ENCODE measurements at regions of chr17 and their contacts with region 1.

Region 1: GRCh38 chr17:43940630-43941029 is 1.6 kb downstream of the PPY start:
- DNase-seq: peak; percentile 38 to 48 (median 47)
- H3K4me3 ChIP-seq: no peak overlapping the region
- H3K27ac ChIP-seq: no peak overlapping the region
- H3K4me1 ChIP-seq: peaks cover 0 to 12% (median 10%) of the 10 kb centered on the region in 4 experiments
- H3K27me3 ChIP-seq: peaks cover 0 to 20% (median 3%) of the 10 kb centered on the region in 5 experiments

Region 2: DNA sequence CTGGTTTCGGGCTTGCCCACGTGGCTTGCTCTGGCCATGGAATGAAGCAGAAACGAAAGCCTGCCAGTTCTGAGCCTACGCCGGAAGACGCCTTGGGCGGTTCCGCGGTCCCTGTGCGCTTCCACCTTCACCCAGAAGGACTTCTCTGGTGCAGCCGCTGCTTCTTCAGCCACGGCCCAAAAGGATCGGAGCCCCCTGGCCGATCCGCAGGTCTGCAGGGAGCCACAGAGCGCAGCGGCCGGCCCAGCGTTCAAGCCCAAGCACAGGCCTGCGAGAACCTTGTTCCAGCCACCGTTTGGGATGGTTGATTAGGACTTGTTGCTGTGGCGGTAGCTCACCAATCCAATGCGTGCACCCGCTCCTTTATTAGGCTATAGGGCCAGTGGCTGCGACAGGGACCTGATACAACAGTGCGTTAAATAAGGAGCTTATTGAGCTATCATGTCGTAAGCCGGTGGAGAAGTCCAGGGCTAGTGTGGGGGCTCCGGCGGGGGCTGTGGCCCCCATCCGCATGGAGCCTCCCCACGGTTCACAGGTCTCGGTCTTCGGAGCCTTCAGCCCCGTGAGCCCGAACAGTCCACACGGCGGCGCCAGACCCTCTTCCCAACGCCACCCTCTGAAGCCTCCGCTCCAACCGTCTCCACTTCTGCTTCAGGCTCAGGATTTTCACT is 23.1 kb before region 1 on chr17:
- CTCF ChIA-PET with region 1: interaction called, 11 read pairs
- POLR2A ChIA-PET with region 1: no interaction called
- DNase-seq: peak; percentile 60 to 78 (median 71)
- H3K4me3 ChIP-seq: peak overlapping the region in 6 of 7 experiments; percentile 39 to 83 (median 66)
- H3K27ac ChIP-seq: no peak overlapping the region
- H3K4me1 ChIP-seq: peaks cover 0 to 13% (median 6%) of the 10 kb centered on the region in 4 experiments
- H3K27me3 ChIP-seq: peaks cover 0 to 6% (median 0%) of the 10 kb centered on the region in 5 experiments

Region 3: GRCh38 chr17:43924558-43924957 is 16.1 kb before region 1 on chr17:
- CTCF ChIA-PET with region 1: interaction called, 17 read pairs
- POLR2A ChIA-PET with region 1: interaction called, 4 read pairs
- DNase-seq: no peak
- H3K4me3 ChIP-seq: no peak overlapping the region
- H3K27ac ChIP-seq: no peak overlapping the region
- H3K4me1 ChIP-seq: peaks cover 0 to 18% (median 15%) of the 10 kb centered on the region in 4 experiments
- H3K27me3 ChIP-seq: peaks cover 0 to 17% (median 15%) of the 10 kb centered on the region in 5 experiments

Region 4: DNA sequence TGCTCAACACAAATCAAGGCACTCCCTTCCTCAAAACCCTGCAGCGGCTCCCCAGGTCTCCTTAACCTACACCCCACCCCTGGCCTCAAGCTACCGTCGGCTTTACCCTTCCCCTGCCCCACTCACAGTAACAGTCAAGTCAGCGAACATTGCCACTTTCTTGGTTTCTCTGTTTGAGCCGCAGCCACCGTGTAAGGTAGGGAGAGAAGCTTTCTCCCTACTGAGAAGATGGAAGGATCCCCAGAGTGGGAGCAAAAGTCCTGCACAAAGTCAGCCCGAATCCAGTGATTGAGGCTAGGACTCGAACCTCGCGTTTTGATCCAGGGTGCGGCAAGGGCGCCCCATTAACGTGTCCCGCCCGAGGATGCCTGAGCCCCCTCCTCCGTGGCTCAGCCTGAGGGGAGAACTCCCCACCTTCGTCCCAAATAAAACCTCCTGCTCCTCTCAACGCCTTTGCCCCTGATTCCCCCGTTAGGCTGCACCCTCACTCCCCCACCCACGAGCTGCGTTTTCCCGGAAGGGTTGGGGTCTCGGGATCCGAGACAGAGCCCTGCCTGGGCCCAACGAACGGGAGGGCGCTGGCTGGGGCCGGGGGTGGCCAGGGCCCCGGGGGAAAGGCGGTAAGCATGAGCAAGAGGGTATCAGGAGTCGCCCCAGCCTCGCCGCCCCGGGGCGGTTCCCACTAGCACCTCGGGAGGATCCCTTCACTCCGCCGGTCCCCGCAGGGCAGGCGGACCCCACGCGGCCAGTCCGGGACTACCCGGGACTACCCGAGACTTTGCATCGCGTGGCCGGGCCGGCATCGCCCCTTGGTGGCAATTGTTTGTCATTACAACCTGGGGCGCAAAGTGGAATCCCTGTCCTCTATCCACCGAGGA is 53.9 kb after region 1 on chr17:
- CTCF ChIA-PET with region 1: interaction called, 218 read pairs
- POLR2A ChIA-PET with region 1: interaction called, 3 read pairs
- DNase-seq: peak; percentile 69 to 76 (median 70)
- H3K4me3 ChIP-seq: peak overlapping the region in 3 of 7 experiments; percentile 50 to 72 (median 59)
- H3K27ac ChIP-seq: no peak overlapping the region
- H3K4me1 ChIP-seq: peaks cover 0 to 10% (median 6%) of the 10 kb centered on the region in 4 experiments
- H3K27me3 ChIP-seq: peaks cover 0 to 29% (median 13%) of the 10 kb centered on the region in 5 experiments

Region 5: GRCh38 chr17:44044067-44044466 is 103.4 kb after region 1 on chr17:
- CTCF ChIA-PET with region 1: interaction called, 10 read pairs
- POLR2A ChIA-PET with region 1: no interaction called
- DNase-seq: no peak
- H3K4me3 ChIP-seq: no peak overlapping the region
- H3K27ac ChIP-seq: no peak overlapping the region
- H3K4me1 ChIP-seq: peaks cover 0 to 2% (median 0%) of the 10 kb centered on the region in 4 experiments
- H3K27me3 ChIP-seq: no peaks in the 10 kb centered on the region